ENCODE measurements at regions of chr19 and their contacts with region 1.

Region 1: GRCh38 chr19:7177926-7178325 is 108.4 kb downstream of the ZNF557 start:
- DNase-seq: no peak
- H3K4me3 ChIP-seq: no peak overlapping the region
- H3K27ac ChIP-seq: peak overlapping the region; percentile 77 to 87 (median 80)
- H3K4me1 ChIP-seq: peaks cover 21 to 47% (median 38%) of the 10 kb centered on the region in 4 donors
- H3K27me3 ChIP-seq: no peaks in the 10 kb centered on the region
- CTCF ChIP-seq: no peak
- EP300 ChIP-seq: peak; percentile 12
- POLR2A ChIP-seq: no peak

Region 2: DNA sequence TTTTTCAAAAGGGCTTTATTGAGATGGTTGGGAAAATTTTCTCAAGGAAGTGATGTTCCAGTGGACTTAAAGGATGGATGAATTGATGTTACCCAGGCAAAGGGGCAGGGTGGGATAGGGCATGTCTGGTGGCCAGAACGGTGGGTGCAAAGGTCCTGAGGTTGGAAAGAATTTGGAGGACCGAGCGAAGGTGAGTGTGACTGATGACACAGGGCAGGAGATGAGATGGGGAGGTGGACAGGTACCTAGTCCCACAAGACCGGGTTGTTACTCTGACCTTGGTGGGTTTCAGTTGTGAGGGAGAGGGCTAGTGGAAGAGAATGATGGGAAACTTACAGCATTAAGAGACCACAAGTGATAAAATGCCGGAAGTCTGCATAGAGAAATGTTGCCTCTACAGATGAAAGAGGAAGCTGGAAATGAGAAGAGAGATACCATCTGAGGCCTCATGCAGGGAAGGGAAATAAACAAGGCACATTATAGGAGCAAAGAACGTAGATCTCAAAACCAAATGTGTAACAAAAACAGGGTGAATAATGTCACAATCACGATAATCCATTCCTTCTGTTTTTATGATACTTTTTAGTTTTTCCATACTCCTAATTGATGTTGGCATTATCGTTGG is 286.1 kb before region 1 on chr19:
- in situ Hi-C with region 1: no loop called
- intact Hi-C with region 1: no loop called
- DNase-seq: no peak
- H3K4me3 ChIP-seq: no peak overlapping the region
- H3K27ac ChIP-seq: no peak overlapping the region
- H3K4me1 ChIP-seq: no peaks in the 10 kb centered on the region
- H3K27me3 ChIP-seq: no peaks in the 10 kb centered on the region
- CTCF ChIP-seq: no peak
- EP300 ChIP-seq: no peak
- POLR2A ChIP-seq: no peak

Region 3: GRCh38 chr19:7224209-7224686 is 46.3 kb after region 1 on chr19:
- in situ Hi-C with region 1: no loop called
- intact Hi-C with region 1: loop called (anchors 2 kb)
- DNase-seq: peak; percentile 70
- H3K4me3 ChIP-seq: no peak overlapping the region
- H3K27ac ChIP-seq: peak overlapping the region; percentile 38 to 80 (median 67)
- H3K4me1 ChIP-seq: peaks cover 7 to 24% (median 17%) of the 10 kb centered on the region in 4 donors
- H3K27me3 ChIP-seq: no peaks in the 10 kb centered on the region
- CTCF ChIP-seq: no peak
- EP300 ChIP-seq: no peak
- POLR2A ChIP-seq: no peak

Measured in transverse colon (tissue), 4 donors.